ENCODE measurements at regions of chr6 and their contacts with region 1.

Region 1: GRCh38 chr6:166775180-166776081 is 148.4 kb upstream of the RPS6KA2 start:
- DNase-seq: peak; percentile 70
- ATAC-seq: peak; percentile 86
- H3K4me3 Mint-ChIP-seq: no peak overlapping the region
- H3K27ac Mint-ChIP-seq: no peak overlapping the region
- H3K4me1 Mint-ChIP-seq: no peaks in the 10 kb centered on the region
- H3K27me3 Mint-ChIP-seq: peaks cover 12% of the 10 kb centered on the region
- CTCF ChIP-seq: peak; percentile 77

Region 2: DNA sequence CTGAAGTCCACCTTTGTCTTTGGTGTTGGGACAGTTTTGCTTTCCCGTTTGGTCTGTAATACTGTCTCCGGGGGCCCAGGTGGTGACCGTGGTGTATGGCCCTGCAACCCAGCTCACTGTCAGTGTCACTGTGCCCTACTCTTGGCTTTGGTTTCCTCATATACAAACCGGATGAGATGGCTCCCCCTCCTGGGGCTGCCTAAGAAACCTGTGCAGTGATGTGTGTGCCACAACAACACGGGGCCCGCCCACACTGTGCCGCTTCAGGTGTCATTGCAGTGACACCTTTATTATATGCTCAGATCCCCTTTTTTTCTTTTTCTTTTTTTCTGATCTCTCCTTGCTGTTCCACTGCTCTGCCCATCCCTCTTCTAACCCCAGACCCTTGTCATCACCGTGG is 262.9 kb before region 1 on chr6:
- CTCF ChIA-PET with region 1: no interaction called
- POLR2A ChIA-PET with region 1: no interaction called
- intact Hi-C with region 1: no loop called
- DNase-seq: peak; percentile 79
- ATAC-seq: peak; percentile 79
- H3K4me3 Mint-ChIP-seq: no peak overlapping the region
- H3K27ac Mint-ChIP-seq: no peak overlapping the region
- H3K4me1 Mint-ChIP-seq: peaks cover 13% of the 10 kb centered on the region
- H3K27me3 Mint-ChIP-seq: no peaks in the 10 kb centered on the region
- CTCF ChIP-seq: no peak

Region 3: DNA sequence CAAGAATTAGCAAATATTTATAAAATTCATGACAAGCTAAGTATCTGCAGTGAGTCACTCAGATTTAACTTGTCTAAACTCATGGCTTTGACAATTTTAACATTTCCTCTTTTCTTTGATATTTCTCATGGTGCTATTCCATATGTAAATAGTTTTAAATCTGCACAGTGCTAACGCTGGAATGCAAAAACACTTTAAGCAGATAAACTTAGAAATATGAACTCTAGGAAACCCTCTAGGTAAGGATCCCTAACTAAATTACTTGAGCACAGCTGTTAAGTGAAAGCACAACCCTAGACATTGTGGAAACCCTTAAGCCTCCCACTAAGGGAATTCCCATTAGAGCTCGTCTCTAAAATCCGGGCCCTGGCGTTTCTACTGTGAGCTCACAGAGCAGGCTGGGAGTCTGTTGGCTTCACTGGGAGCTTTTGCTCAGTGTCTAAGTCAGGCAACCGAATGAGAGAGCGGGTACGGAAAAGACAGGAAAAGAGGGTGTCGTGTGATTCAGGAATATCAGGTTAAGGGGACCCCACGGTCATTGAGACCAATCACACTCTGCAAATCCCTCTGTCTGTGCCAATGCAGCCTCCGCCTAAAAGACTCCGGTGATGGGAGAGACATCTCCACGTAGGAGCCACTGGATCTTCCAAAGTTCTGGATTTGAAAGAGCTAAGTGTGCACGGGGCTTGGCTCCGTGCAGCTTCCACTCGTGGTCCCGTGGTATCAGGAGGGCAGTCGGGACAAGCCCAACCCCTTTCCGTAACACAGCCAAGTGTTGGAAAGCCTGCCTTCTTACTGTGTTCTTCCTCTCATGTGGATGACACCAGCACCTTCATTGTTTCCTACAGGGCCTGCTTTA is 36.1 kb before region 1 on chr6:
- CTCF ChIA-PET with region 1: interaction called, 11 read pairs
- POLR2A ChIA-PET with region 1: interaction called, 5 read pairs
- intact Hi-C with region 1: no loop called
- DNase-seq: no peak
- ATAC-seq: no peak
- H3K4me3 Mint-ChIP-seq: no peak overlapping the region
- H3K27ac Mint-ChIP-seq: no peak overlapping the region
- H3K4me1 Mint-ChIP-seq: no peaks in the 10 kb centered on the region
- H3K27me3 Mint-ChIP-seq: no peaks in the 10 kb centered on the region
- CTCF ChIP-seq: no peak

Region 4: GRCh38 chr6:166786704-166787293 is 11.4 kb after region 1 on chr6:
- CTCF ChIA-PET with region 1: interaction called, 14 read pairs
- POLR2A ChIA-PET with region 1: no interaction called
- intact Hi-C with region 1: no loop called
- DNase-seq: peak; percentile 14
- ATAC-seq: no peak
- H3K4me3 Mint-ChIP-seq: no peak overlapping the region
- H3K27ac Mint-ChIP-seq: no peak overlapping the region
- H3K4me1 Mint-ChIP-seq: no peaks in the 10 kb centered on the region
- H3K27me3 Mint-ChIP-seq: no peaks in the 10 kb centered on the region
- CTCF ChIP-seq: peak; percentile 91

Region 5: GRCh38 chr6:166803471-166803870 is 28.0 kb after region 1 on chr6:
- CTCF ChIA-PET with region 1: no interaction called
- POLR2A ChIA-PET with region 1: no interaction called
- intact Hi-C with region 1: no loop called
- DNase-seq: no peak
- ATAC-seq: no peak
- H3K4me3 Mint-ChIP-seq: no peak overlapping the region
- H3K27ac Mint-ChIP-seq: no peak overlapping the region
- H3K4me1 Mint-ChIP-seq: no peaks in the 10 kb centered on the region
- H3K27me3 Mint-ChIP-seq: no peaks in the 10 kb centered on the region
- CTCF ChIP-seq: no peak

Region 6: GRCh38 chr6:166989427-166990032 is 214.1 kb after region 1 on chr6:
- CTCF ChIA-PET with region 1: interaction called, 46 read pairs
- POLR2A ChIA-PET with region 1: no interaction called
- intact Hi-C with region 1: no loop called
- DNase-seq: peak; percentile 44
- ATAC-seq: peak; percentile 75
- H3K4me3 Mint-ChIP-seq: no peak overlapping the region
- H3K27ac Mint-ChIP-seq: no peak overlapping the region
- H3K4me1 Mint-ChIP-seq: peaks cover 1% of the 10 kb centered on the region
- H3K27me3 Mint-ChIP-seq: no peaks in the 10 kb centered on the region
- CTCF ChIP-seq: peak; percentile 51

Region 7: DNA sequence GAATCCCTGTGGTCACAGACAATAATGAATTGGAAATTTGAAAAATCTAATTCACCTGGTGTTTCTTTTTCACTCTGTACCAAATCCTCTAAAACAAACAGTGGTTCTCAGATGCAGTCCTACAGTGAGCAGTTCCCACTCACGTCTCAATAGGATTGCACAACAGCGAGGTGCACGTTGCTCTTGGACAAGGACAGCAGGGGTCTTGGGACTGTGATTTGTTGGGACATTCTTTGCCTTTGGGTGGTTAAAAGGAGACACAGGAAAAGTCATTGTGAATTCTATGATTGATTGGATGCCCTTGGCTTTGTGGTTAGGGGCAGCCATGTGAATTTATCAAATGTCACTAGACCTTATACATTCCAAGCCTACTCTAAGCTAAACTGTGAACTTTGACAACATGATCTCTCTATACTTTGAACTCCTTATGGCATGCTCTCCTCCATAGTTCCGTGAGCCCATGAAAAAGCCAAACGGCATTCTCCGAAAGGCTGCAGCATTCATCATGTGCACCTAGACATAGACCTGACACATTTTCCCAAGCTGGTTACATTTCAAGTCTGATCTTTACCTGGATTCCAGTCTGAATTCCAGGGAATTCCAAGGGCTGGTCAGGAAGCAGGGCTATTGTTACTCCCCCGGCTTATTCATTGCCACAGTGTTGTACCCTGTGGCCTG is 516.3 kb after region 1 on chr6:
- CTCF ChIA-PET with region 1: interaction called, 12 read pairs
- POLR2A ChIA-PET with region 1: no interaction called
- intact Hi-C with region 1: no loop called
- DNase-seq: no peak
- ATAC-seq: no peak
- H3K4me3 Mint-ChIP-seq: no peak overlapping the region
- H3K27ac Mint-ChIP-seq: no peak overlapping the region
- H3K4me1 Mint-ChIP-seq: no peaks in the 10 kb centered on the region
- H3K27me3 Mint-ChIP-seq: no peaks in the 10 kb centered on the region
- CTCF ChIP-seq: no peak

Measured in activated CD8-positive, alpha-beta T cell treated with anti-CD3 and anti-CD28 coated beads for 36 hours (primary cell).